Heart right ventricle (tissue), 16 donors: ENCODE measurements at regions of chr1 and their contacts with region 1.

Region 1: DNA sequence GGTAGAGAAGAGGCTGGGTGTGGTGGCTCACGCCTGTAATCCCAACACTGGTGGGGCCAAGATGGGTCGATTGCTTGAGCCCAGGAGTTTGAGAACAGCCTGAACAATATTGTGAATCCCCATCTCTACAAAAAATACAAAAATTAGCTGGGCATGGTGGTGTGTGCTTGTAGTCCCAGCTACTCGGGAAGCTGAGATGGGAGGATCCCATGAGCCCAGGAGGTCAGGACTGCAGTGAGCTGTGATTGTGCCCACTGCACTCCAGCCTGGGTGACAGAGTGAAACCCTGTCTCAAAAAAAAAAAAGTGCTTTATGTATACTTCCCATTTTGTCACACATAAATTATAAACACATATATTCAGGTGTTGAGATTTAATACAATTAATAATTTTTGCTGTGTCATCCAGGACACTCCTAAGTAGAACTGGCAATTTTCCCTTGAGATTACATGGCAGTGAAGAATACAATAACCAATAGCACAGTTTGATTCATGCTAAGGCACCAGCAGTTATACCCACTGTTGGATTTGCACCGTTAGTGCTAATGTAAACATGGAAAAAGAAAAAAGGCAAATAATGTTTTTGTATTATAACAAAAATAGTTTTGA is 15.5 kb downstream of the GABPB2 start:
- DNase-seq: no peak
- ATAC-seq: no peak
- H3K4me3 ChIP-seq: no peak overlapping the region
- H3K27ac ChIP-seq: no peak overlapping the region
- H3K4me1 ChIP-seq: no peaks in the 10 kb centered on the region
- H3K27me3 ChIP-seq: no peaks in the 10 kb centered on the region
- CTCF ChIP-seq: no peak

Region 2: GRCh38 chr1:151156515-151156819 is 70.4 kb after region 1 on chr1 and contains the start of gene TNFAIP8L2:
- intact Hi-C with region 1: no loop called
- DNase-seq: peak in 1 of 2 donors; percentile 53
- ATAC-seq: peak; percentile 39 to 71 (median 58)
- H3K4me3 ChIP-seq: peak within 1 kb of the TSS in 7 of 10 donors; percentile 8 to 58 (median 32)
- H3K27ac ChIP-seq: peak within 1 kb of the TSS in 5 of 10 donors; percentile 13 to 90 (median 48)
- H3K4me1 ChIP-seq: peaks cover 0 to 45% (median 5%) of the 10 kb centered on the region in 9 donors
- H3K27me3 ChIP-seq: no peaks in the 10 kb centered on the region
- CTCF ChIP-seq: no peak
- total RNA-seq, gene TNFAIP8L2: 0.35 to 5.8 (median 0.71) TPM in 9 of 10 donors, not detected in the other

Region 3: GRCh38 chr1:151243683-151244216 is 157.7 kb after region 1 on chr1:
- intact Hi-C with region 1: loop called in 1 of 10 experiments (anchors 10 kb)
- DNase-seq: no peak
- ATAC-seq: no peak
- H3K4me3 ChIP-seq: no peak overlapping the region
- H3K27ac ChIP-seq: no peak overlapping the region
- H3K4me1 ChIP-seq: no peaks in the 10 kb centered on the region
- H3K27me3 ChIP-seq: no peaks in the 10 kb centered on the region
- CTCF ChIP-seq: no peak